Activated CD4-positive, alpha-beta T cell treated with anti-CD3 and anti-CD28 coated beads for 36 hours (primary cell): ENCODE measurements at regions of chr19 and their contacts with region 1.

Region 1: GRCh38 chr19:1401138-1401888 is at the start of gene GAMT:
- DNase-seq: peak; percentile 76
- ATAC-seq: peak; percentile 78
- H3K4me3 Mint-ChIP-seq: peak within 1 kb of the TSS; percentile 71
- H3K27ac Mint-ChIP-seq: no peak within 1 kb of the TSS
- H3K4me1 Mint-ChIP-seq: peaks cover 12% of the 10 kb centered on the region
- H3K27me3 Mint-ChIP-seq: peaks cover 2% of the 10 kb centered on the region
- total RNA-seq, gene GAMT: 30.4 to 31.5 TPM

Region 2: DNA sequence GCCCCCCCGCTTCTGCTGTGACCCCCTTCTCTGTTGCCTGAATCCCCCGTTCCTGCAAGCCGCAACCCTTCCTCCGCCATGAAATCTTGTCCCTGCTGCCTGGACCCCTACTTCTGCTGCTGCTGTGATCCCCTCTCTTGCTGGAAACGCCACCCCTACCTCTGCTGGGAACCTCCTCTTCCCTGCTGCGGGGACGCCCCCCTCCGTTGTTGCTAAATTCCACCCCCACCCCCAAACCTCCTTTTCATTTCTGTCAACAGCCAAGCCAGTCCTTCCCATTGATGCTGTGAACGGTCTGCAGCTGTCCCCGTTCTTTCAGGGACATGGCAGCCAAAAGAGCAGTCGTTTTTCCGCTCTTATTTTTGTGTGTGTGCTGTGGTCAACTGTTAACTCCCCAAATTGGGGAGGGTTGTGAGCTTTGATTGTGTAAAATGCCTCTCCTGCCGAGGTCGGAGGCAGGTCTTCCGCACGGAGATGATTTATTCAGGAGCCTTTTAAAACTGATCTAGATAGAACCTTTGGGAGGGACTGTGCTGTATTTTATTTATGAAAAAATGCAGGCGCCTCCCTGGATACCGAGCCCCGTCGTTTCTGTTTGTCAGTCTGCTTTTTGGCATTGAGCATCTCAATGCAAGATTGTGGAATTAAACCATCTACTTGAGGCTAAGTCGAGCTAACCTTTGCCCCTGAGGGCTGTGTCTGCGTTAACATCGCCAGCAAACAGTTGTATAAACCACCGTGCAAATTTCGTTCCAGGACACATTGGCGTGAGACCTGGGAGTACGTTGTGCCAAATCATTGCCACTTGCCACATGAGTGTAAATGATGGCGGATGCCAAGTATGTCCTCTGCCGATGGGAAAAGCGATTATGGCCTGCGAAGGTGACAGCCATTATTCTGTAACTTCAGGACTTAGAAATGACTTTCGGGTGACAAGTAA is 45.5 kb before region 1 on chr19:
- CTCF ChIA-PET with region 1: no interaction called
- POLR2A ChIA-PET with region 1: no interaction called
- intact Hi-C with region 1: loop called in 1 of 2 experiments (anchors 1 kb)
- DNase-seq: peak; percentile 51
- ATAC-seq: no peak
- H3K4me3 Mint-ChIP-seq: peak overlapping the region; percentile 77
- H3K27ac Mint-ChIP-seq: peak overlapping the region; percentile 49
- H3K4me1 Mint-ChIP-seq: peaks cover 9% of the 10 kb centered on the region
- H3K27me3 Mint-ChIP-seq: no peaks in the 10 kb centered on the region